GM13976 (cell line): ENCODE measurements at regions of chr14 and their contacts with region 1.

Region 1: GRCh38 chr14:34678306-34678705 is 36.1 kb downstream of the CFL2 start:
- DNase-seq: no peak
- CTCF ChIP-seq: no peak

Region 2: GRCh38 chr14:34722717-34723545 is 44.6 kb after region 1 on chr14:
- in situ Hi-C with region 1: loop called (anchors 10 kb)
- DNase-seq: peak; percentile 77
- CTCF ChIP-seq: peak; percentile 71

Region 3: GRCh38 chr14:34810028-34810427 is 131.7 kb after region 1 on chr14:
- in situ Hi-C with region 1: no loop called
- DNase-seq: peak; percentile 28
- CTCF ChIP-seq: no peak